Astrocyte of the cerebellum (primary cell): ENCODE measurements at regions of chr11 and their contacts with region 1.

Region 1: GRCh38 chr11:111586388-111586831 is 15.8 kb upstream of the SIK2 start:
- DNase-seq: no peak
- H3K4me3 ChIP-seq: no peak overlapping the region
- CTCF ChIP-seq: peak; percentile 58

Region 2: DNA sequence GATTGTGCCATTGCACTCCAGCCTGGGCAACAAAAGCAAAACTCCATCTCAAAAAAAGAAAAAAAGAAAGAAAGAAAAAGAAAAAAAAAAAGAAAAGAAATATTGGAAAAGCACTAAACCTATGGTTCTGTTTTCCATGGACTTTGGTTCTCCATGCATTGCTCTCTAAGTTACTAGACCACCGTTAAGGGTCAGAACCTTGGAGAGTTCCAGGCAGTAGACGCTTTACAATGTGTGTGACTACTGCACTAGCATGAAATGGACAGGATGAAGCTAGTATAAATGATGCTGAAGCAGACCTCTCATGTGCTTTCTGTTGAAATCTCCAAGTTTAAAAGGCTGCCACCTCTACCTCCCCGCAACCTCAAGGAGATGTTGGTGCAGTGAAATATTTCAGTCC is 79.4 kb after region 1 on chr11:
- in situ Hi-C with region 1: no loop called
- DNase-seq: peak; percentile 57
- H3K4me3 ChIP-seq: no peak overlapping the region
- CTCF ChIP-seq: no peak

Region 3: GRCh38 chr11:111841370-111842053 is 255.1 kb after region 1 on chr11:
- in situ Hi-C with region 1: loop called (anchors 10 kb)
- DNase-seq: peak; percentile 96
- H3K4me3 ChIP-seq: no peak overlapping the region
- CTCF ChIP-seq: peak; percentile 78